AG04450 (cell line): ENCODE measurements at regions of chr2 and their contacts with region 1.

Region 1: GRCh38 chr2:174697255-174697654 is 67.0 kb downstream of the CHRNA1 start:
- DNase-seq: no peak
- H3K4me3 ChIP-seq: no peak overlapping the region
- H3K27ac ChIP-seq: no peak overlapping the region
- H3K27me3 ChIP-seq: peaks cover 15% of the 10 kb centered on the region
- CTCF ChIP-seq: peak; percentile 93

Region 2: DNA sequence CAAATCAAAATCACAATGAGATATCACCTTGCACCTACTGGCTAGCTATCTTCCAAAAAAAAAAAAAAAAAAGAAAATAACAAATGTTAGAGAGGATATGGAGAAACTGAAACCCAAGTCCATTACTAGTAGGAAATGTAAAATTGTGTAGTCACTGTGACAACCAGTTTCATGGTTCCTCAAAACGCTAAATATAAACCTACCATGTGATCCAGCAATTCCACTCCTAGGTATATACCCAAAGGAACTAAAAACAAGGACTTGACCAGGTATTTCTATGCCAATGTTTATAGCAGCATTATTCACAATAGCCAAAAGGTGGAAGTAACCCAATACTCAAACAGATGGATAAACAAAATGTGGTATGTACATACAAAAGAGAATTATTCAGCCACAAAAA is 313.5 kb before region 1 on chr2:
- CTCF ChIA-PET with region 1: no interaction called
- POLR2A ChIA-PET with region 1: no interaction called
- DNase-seq: no peak
- H3K4me3 ChIP-seq: no peak overlapping the region
- H3K27ac ChIP-seq: no peak overlapping the region
- H3K27me3 ChIP-seq: no peaks in the 10 kb centered on the region
- CTCF ChIP-seq: no peak

Region 3: GRCh38 chr2:174682578-174683391 is 14.5 kb before region 1 on chr2:
- CTCF ChIA-PET with region 1: interaction called, 146 read pairs
- POLR2A ChIA-PET with region 1: no interaction called
- DNase-seq: no peak
- H3K4me3 ChIP-seq: peak overlapping the region; percentile 83
- H3K27ac ChIP-seq: no peak overlapping the region
- H3K27me3 ChIP-seq: peaks cover 3% of the 10 kb centered on the region
- CTCF ChIP-seq: no peak

Region 4: DNA sequence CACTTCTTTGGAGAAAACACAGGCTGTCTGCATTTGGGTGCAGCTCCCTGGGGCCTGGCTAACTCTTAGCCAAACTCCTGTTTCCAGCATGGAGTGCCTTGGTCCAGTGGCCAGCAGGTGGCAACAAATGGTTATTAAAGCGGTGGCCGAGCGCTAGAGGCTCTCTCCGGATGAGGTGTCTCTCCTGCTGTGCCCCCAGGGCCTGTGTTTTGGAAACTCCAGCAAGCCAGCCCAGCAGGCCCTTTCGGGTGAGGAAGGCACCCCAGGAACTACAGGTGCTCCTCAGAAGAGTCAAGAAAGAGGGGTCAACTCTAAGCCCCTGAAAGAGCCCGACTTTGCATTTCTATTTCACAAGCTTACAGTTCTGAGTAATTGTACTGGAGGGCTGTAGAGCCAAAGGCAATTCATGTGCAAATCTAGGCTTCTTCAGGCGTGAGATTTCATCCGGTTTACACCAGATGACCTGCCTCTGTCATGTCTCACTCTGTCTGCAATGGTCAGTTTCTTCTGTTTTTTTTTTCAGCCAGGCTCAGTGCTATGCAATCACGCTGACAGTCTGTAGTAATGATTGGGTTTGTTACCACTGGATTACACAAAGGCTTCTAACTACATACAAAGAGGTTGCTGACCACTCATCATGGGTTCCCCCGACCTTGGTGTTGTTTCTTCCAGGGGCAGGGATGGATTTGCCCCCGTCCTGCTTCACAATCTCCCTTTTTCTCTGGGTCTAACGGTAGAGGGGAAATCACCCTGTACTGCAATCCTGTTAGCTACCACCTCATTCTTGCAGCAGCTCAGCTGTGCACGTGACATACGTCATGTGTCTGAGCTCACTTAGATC is 74.6 kb after region 1 on chr2:
- CTCF ChIA-PET with region 1: interaction called, 11 read pairs
- POLR2A ChIA-PET with region 1: no interaction called
- DNase-seq: no peak
- H3K4me3 ChIP-seq: no peak overlapping the region
- H3K27ac ChIP-seq: peak overlapping the region; percentile 90
- H3K27me3 ChIP-seq: no peaks in the 10 kb centered on the region
- CTCF ChIP-seq: peak; percentile 95

Region 5: GRCh38 chr2:175004980-175005732 is 307.9 kb after region 1 on chr2 and contains the start of gene CHN1:
- CTCF ChIA-PET with region 1: interaction called, 15 read pairs
- POLR2A ChIA-PET with region 1: no interaction called
- DNase-seq: peak; percentile 45
- H3K4me3 ChIP-seq: peak within 1 kb of the TSS; percentile 66
- H3K27ac ChIP-seq: no peak within 1 kb of the TSS
- H3K27me3 ChIP-seq: peaks cover 14% of the 10 kb centered on the region
- CTCF ChIP-seq: peak; percentile 19
- polyA plus RNA-seq, gene CHN1: 207 and 258 TPM in 2 replicates

Region 6: GRCh38 chr2:175103191-175103590 is 405.9 kb after region 1 on chr2:
- CTCF ChIA-PET with region 1: interaction called, 18 read pairs
- POLR2A ChIA-PET with region 1: no interaction called
- DNase-seq: no peak
- H3K4me3 ChIP-seq: no peak overlapping the region
- H3K27ac ChIP-seq: no peak overlapping the region
- H3K27me3 ChIP-seq: no peaks in the 10 kb centered on the region
- CTCF ChIP-seq: no peak

Region 7: DNA sequence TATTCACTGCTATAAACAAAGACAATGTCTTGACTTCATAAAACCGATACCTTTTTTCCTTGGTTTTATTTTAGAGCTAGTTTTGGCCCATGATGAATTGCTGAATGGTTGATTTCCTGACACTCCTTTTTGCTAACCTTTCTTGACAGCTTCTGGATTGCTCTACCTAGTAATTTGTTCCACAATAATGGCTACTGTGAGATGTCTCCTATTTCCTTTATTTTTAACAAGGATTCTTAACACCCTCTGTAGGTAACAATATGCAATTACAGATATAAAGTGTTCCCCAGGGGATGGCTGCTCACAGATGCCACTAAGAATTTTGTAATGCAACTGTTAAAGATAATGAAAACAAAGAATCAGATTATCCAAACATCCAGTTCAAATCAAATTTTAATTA is 585.0 kb after region 1 on chr2:
- CTCF ChIA-PET with region 1: interaction called, 56 read pairs
- POLR2A ChIA-PET with region 1: no interaction called
- DNase-seq: no peak
- H3K4me3 ChIP-seq: no peak overlapping the region
- H3K27ac ChIP-seq: no peak overlapping the region
- H3K27me3 ChIP-seq: peaks cover 8% of the 10 kb centered on the region
- CTCF ChIP-seq: peak; percentile 60

Region 8: GRCh38 chr2:176079831-176080539 is 1382.7 kb after region 1 on chr2:
- CTCF ChIA-PET with region 1: no interaction called
- POLR2A ChIA-PET with region 1: no interaction called
- DNase-seq: no peak
- H3K4me3 ChIP-seq: no peak overlapping the region
- H3K27ac ChIP-seq: no peak overlapping the region
- H3K27me3 ChIP-seq: peaks cover 89% of the 10 kb centered on the region
- CTCF ChIP-seq: peak; percentile 56